A673 (cell line): ENCODE measurements at regions of chr13 and their contacts with region 1.

Region 1: DNA sequence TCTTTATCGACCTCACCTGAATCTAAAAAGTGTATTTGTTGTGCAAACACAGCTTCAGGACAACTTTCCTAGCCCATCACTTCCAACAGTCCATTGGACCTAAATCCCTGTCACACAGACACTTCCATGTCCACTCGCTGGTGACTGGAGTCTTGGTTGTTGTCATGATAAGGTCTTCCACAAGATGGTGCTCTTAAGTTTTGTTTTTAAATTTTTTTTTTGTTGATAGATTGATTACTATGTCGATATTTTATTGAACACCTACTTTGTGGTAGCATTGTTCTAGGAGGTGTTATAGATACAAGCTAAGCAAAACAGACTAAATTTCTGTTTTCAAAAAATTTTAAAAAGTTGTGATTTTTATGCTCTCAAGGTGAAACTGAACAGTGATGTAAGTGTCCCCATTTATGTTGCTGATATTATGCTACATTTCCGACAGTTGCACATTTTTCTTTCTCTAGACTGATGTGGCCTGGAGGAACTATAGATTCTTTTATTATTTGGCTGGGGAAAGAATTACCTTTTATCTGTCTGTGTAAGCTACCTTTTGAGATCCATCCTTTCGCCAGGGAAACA is 8.1 kb upstream of the ERICH6B start:
- DNase-seq: peak; percentile 57
- H3K4me3 ChIP-seq: no peak overlapping the region
- H3K27ac ChIP-seq: no peak overlapping the region
- H3K4me1 ChIP-seq: peaks cover 16% of the 10 kb centered on the region
- H3K27me3 ChIP-seq: no peaks in the 10 kb centered on the region
- CTCF ChIP-seq: peak; percentile 77

Region 2: GRCh38 chr13:45584816-45585215 is 38.8 kb before region 1 on chr13:
- CTCF ChIA-PET with region 1: no interaction called
- POLR2A ChIA-PET with region 1: no interaction called
- intact Hi-C with region 1: no loop called
- DNase-seq: peak; percentile 35
- H3K4me3 ChIP-seq: no peak overlapping the region
- H3K27ac ChIP-seq: no peak overlapping the region
- H3K4me1 ChIP-seq: peaks cover 11% of the 10 kb centered on the region
- H3K27me3 ChIP-seq: no peaks in the 10 kb centered on the region
- CTCF ChIP-seq: peak; percentile 49

Region 3: DNA sequence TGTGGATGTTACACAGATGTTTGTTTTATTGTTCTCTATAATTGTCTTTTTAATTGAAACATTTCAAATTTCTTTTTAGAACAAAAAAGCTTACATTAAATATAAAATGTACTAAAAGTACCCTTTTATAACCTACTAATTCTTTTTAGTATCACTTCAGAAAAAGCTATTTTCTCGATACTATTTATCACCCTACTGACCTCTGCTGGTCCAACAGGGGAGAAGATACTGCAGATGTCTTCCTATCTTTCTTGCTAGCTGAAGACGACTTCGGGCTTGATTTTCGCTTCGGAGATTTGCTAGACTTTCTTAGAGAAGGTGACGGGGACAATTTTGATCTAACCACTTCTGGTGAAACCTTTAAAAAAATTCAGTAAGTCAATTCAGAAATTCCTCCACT is 386.5 kb after region 1 on chr13:
- CTCF ChIA-PET with region 1: interaction called, 3 read pairs
- POLR2A ChIA-PET with region 1: no interaction called
- intact Hi-C with region 1: loop called (anchors 10 kb)
- DNase-seq: peak; percentile 68
- H3K4me3 ChIP-seq: no peak overlapping the region
- H3K27ac ChIP-seq: peak overlapping the region; percentile 32
- H3K4me1 ChIP-seq: peaks cover 55% of the 10 kb centered on the region
- H3K27me3 ChIP-seq: no peaks in the 10 kb centered on the region
- CTCF ChIP-seq: peak; percentile 66